Astrocyte of the cerebellum (primary cell): ENCODE measurements at regions of chr10 and their contacts with region 1.

Region 1: DNA sequence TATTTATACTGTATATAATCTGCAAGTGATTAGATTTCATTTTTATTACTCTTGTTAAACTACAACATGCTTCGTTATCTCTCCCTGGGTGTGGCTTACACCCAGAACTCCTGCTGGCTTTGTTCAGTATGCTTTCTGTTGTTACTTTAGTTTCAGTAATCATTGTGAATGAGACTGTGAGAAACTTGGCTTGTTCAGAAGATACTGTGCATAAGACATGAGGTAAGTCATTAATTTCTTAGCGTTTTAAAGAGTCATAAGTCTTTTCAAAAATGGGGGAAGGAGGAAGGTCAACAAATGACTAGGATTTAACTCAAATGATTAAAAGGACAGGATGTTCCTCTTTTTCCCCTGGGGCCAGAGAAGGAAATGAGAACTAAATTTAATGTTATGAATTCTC is 11.6 kb upstream of the ADD3 start:
- DNase-seq: no peak
- H3K4me3 ChIP-seq: no peak overlapping the region
- CTCF ChIP-seq: no peak

Region 2: DNA sequence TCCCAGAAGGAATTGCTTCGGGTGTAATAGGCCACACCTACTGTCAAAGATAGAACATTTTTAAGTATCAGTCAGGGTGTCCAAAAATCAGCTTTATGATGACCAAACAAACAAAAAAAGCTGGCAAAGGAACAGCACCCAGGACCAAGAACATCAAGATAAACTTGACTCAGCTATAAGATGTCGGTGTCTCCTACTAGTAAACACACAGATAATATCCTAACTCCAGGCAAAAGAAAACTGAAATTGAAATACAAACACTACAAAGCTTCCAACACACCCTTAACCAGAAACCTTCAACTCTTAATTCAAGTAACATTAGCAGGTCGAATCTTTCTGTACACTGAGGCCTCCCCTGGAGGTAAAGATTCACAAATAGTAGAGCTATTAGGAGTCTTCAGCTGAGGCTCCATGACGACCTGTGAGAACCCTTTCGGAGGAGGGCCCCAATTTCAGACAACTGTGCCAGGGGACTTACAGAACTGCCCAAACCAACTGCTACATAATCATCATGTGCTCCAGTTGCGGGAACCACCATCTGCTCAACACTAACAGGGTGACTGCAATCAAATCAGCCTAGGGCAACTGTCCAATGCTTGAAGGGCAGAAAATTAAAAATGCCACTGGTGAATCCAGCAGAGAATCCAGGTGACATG is 93.2 kb before region 1 on chr10:
- in situ Hi-C with region 1: loop called (anchors 5 kb)
- DNase-seq: no peak
- H3K4me3 ChIP-seq: no peak overlapping the region
- CTCF ChIP-seq: no peak